RWPE1 (cell line): ENCODE measurements at regions of chr5 and their contacts with region 1.

Region 1: DNA sequence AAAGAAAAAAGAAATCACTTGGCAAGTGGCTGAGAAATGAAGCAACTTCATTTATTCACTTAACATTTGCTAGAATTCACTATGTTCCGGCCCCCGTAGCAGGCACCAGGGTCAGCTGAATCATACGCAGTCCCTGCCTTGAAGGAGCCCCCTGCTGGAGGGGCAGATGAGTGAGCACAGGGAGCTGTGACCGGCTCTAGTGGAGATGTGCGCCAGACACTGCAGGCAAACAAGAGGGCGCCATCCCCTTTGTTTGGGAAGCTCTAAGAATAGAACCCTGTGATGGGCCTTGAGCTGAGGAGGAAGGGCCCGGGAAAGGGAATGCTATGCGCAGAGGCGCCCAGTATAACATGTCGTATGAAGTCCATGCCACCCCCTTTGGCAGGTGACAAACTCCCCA is 20.2 kb upstream of the RPL26L1 start:
- DNase-seq: no peak
- H3K27ac ChIP-seq: 0 out of 2 replicates have a peak overlapping the region, but pooled peaks have one; percentile 2
- CTCF ChIP-seq: no peak; the same call in 1 of the 2 replicates

Region 2: DNA sequence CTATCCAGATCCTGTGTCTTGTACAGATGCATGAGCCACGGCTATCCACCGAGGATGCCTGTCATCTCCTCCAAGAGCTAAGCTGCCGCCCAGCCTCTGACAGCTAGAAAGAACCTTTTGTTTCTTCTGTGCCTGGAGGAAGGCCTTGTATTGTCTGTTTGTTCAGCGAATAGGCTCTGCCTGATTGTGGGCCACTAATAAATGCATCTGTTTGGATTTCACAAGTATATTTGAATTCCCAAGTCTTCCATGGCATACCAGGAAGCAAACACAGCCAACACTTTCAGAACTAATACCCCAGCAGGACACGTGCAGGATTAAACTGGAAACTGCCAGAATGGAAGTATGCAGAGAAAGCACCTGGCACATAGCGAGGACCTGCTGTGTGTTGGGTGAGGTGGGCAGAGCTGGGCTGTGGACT is 390.8 kb before region 1 on chr5:
- CTCF ChIA-PET with region 1: no interaction called
- POLR2A ChIA-PET with region 1: no interaction called
- DNase-seq: no peak
- H3K27ac ChIP-seq: no peak overlapping the region
- CTCF ChIP-seq: no peak

Region 3: DNA sequence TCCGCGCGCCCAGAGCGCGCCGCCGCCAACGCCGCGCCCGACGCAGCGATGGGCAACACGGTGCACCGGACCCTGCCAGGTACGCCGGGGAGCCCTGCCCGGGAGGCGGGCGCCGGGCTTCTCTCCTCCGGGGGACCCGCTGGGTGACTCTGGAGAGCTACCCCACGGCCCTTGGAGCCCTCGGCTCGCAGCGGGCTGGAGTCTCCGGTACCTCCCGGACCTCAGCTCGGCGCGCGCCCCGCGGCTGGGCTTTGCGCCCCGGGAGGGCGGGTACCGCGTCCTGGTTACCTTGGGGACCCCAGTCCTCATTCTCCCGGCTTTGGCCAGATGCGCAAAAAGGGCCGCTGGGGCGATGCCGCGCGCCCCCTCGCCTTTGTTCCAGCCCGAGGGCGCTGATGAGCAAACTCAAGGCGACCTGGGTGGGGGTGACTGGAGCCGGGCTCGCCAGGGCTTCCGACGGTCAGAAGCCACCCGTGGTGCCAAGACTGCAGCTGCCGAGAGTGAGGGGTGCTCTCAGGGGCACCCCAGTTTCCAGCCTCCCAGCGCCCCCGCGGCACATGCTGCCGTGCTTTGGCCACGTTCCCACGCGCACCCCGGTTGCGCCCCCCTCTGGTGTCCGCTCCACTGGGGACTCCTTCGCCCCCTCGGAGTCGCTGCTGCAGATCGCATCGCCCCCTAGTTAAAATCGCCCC is 297.6 kb before region 1 on chr5:
- CTCF ChIA-PET with region 1: no interaction called
- POLR2A ChIA-PET with region 1: no interaction called
- DNase-seq: no peak
- H3K27ac ChIP-seq: peak overlapping the region; percentile 80
- CTCF ChIP-seq: no peak

Region 4: GRCh38 chr5:172870291-172870714 is 68.8 kb before region 1 on chr5:
- CTCF ChIA-PET with region 1: no interaction called
- POLR2A ChIA-PET with region 1: no interaction called
- DNase-seq: peak; percentile 93
- H3K27ac ChIP-seq: peak overlapping the region; percentile 98
- CTCF ChIP-seq: no peak

Region 5: DNA sequence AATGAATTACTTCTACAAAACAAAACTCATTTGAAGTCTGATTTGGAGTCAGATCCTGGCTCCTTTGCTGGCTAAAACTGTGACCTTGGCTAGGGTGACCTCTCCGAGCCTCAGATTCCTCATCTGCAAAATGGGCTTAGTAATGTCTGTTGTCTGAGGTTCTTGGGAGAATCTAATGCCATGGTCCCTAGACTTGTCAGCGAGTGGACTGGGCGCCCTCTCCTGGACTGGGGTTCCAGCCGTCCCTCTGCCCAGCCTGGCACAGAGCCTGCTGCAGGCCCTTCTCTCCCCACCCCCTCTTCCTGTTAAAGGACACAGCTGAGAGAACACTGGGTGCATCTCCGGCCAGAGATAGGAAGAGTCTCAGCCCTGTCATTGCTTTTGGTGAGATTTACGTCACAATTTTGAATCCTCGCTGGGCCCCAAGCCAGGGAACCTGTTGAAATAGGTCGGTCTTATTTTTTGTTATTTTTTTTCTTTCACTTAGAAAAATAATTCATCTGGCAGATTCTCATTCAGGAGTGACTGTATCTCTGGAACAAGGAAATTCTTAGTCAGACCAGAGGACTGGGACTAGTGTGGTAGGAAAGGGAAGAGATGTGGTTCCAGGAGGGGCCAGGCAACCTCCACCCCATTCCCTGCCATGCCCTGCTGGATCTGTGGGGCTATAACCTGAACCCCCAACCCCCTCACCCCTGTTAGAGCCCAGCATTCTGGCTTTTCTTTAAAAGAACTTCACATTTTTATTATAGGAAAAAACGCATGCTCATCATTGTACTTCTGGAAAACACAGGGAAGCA is 28.0 kb before region 1 on chr5:
- CTCF ChIA-PET with region 1: interaction called, 12 read pairs
- POLR2A ChIA-PET with region 1: no interaction called
- DNase-seq: no peak
- H3K27ac ChIP-seq: peak overlapping the region; percentile 100
- CTCF ChIP-seq: peak; percentile 66